Left cardiac atrium (tissue), 4 donors: ENCODE measurements at regions of chr11 and their contacts with region 1.

Region 1: DNA sequence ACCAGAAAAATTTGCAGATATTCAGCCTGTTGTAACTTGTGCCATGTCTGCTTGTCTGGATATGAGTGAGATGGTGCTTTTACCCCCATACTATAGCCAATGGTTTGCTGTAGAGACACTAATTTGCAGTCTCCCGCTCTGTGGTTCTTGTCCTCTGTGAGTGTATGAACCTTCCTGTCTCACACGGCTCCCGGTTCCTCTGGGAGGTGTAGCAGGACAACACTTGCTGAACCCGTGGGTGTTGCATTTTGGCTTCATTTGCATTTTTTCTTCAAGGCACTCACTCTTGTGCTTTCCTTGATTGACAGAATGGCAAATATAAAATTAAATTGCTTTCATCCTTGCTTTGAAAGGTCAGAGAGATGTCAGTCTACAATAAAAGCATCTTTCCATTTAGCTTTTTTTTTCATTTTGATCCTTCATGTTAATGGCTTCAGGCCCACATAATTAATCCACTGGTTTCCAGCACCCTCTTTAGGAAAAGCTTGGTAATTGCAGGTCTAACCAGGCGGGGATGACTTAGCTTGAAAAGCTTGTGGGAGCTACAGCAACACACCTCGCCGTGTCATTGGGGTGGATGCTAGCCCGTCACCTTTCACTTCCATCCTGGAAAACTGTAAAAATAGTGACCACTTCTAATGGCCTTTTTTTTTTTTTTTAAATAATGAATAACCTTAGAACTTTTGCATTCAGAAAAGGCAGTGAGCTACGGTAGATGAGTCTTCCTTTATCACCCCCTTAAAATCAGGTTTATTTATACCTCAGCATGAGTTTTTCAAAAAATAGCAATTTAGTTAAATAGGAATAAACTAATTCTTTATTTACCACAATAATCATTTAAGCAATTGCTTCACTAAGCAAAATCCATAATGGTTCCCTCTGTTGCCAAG is 27.4 kb upstream of the ST14 start:
- DNase-seq: no peak
- ATAC-seq: peak; percentile 71 to 79

Region 2: DNA sequence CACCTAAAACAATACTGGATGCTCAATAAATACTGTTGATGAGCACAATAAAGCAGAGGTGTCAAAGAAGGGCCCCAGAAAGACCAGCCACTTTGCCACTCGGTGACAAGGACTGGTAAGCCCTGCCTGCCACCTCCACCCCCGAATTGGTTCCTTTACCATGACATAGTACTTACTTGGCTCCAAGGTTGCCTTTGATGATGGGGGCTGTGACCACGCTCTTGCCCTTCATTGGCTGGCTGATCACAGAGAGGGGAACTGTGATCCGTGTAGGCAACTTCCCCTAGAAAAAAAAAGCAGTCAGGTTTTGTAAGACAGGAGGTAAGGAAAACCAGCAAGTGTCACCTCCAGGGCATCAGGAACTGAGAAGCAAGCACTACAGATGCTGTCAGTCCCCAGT is 266.5 kb before region 1 on chr11:
- intact Hi-C with region 1: no loop called
- DNase-seq: no peak
- ATAC-seq: no peak

Region 3: DNA sequence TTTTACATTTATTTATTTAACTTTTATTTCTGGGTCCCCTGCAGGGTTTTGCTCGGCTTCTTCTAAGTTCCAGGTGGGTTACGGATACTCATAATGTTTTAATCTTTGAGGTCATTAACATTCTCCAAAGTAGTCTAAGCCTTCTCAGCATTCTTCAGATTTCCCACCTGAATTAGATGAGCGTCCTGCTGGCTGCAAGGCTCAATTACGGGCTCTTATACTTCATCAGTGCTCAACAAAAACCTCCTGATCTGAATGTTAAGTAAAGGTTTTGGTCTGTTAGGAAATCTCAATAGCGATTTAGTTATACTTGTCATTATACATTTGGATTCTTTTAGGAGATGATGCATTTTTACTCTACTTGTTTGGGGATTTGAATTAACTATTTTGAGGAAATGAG is 209.5 kb before region 1 on chr11:
- intact Hi-C with region 1: loop called (anchors 1 to 5 kb)
- DNase-seq: no peak
- ATAC-seq: no peak

Region 4: GRCh38 chr11:129992161-129992944 is 139.9 kb before region 1 on chr11:
- intact Hi-C with region 1: loop called (anchors 5 to 10 kb)
- DNase-seq: no peak
- ATAC-seq: peak; percentile 67 to 74

Region 5: GRCh38 chr11:130314750-130315285 is 182.6 kb after region 1 on chr11 and contains the start of gene ZBTB44:
- intact Hi-C with region 1: no loop called
- DNase-seq: peak; percentile 94
- ATAC-seq: peak; percentile 97 to 98
- total RNA-seq, gene ZBTB44: 37.5 to 40.7 TPM